Uterus (tissue), 4 donors: ENCODE measurements at regions of chr2 and their contacts with region 1.

Region 1: DNA sequence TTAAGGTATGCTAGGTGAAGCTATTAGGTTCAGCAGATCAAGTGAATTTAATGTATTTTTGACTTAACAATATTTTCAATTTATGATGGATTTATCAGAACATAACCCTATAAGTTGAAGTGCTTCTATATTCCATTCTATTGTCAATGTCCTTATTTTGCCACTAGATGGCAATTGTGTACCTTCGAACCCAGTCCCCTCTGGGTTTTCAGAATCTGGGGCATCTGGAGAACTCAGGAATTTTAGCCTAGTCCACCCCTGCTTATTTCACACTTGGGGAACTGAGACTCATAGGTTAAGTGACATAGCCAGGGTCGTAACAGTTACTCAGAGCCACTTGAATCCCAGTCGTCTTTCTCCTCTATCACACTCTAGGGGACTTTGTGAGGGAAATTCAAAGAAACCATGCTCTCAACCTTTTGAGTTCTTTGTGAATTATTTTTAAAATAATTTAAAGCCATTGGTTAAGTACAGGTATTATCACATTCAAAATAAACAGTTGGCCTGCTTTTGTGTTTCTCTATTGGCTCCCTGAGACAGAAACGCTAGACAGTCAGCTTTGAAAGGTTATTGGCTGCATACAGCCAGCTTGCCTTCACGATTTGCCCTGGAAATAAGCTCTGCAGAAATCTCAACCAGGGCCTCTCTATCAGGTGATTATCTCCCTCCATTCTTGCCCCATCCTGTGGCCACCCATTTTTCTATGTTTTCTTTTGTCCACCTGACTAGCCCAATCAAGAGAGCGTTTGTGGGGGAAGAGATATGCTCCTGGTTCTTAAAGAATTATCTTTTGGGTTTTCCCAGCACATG is 145.0 kb downstream of the TTC27 start:
- DNase-seq: peak in 1 of 2 donors; percentile 18
- H3K4me3 ChIP-seq: no peak overlapping the region
- H3K27ac ChIP-seq: peak overlapping the region; percentile 4 to 50
- H3K4me1 ChIP-seq: no peaks in the 10 kb centered on the region
- H3K27me3 ChIP-seq: no peaks in the 10 kb centered on the region
- CTCF ChIP-seq: peak; percentile 54 to 78 (median 72)
- POLR2A ChIP-seq: no peak

Region 2: GRCh38 chr2:32946314-32947075 is 173.7 kb after region 1 on chr2 and contains the start of gene LTBP1:
- intact Hi-C with region 1: loop called (anchors 10 kb)
- DNase-seq: peak; percentile 74 to 86
- H3K4me3 ChIP-seq: peak within 1 kb of the TSS; percentile 46 to 88
- H3K27ac ChIP-seq: peak within 1 kb of the TSS; percentile 90 to 97
- H3K4me1 ChIP-seq: no peaks in the 10 kb centered on the region
- H3K27me3 ChIP-seq: no peaks in the 10 kb centered on the region
- CTCF ChIP-seq: peak; percentile 59 to 74 (median 61)
- POLR2A ChIP-seq: peak in 1 of 2 donors; percentile 70
- total RNA-seq, gene LTBP1: 72.5 to 322 (median 92.2) TPM

Region 3: GRCh38 chr2:33033606-33034081 is 260.8 kb after region 1 on chr2:
- intact Hi-C with region 1: loop called (anchors 5 kb)
- DNase-seq: peak in 1 of 2 donors; percentile 42
- H3K4me3 ChIP-seq: peak overlapping the region; percentile 30 to 37
- H3K27ac ChIP-seq: peak overlapping the region; percentile 66 to 81
- H3K4me1 ChIP-seq: no peaks in the 10 kb centered on the region
- H3K27me3 ChIP-seq: no peaks in the 10 kb centered on the region
- CTCF ChIP-seq: peak; percentile 66 to 79 (median 72)
- POLR2A ChIP-seq: no peak

Region 4: GRCh38 chr2:33380001-33380609 is 607.3 kb after region 1 on chr2:
- intact Hi-C with region 1: loop called (anchors 10 kb)
- DNase-seq: no peak
- H3K4me3 ChIP-seq: no peak overlapping the region
- H3K27ac ChIP-seq: no peak overlapping the region
- H3K4me1 ChIP-seq: no peaks in the 10 kb centered on the region
- H3K27me3 ChIP-seq: no peaks in the 10 kb centered on the region
- CTCF ChIP-seq: peak in 2 of 4 experiments; percentile 18 to 20
- POLR2A ChIP-seq: no peak